Right cardiac atrium (tissue), 5 donors: ENCODE measurements at regions of chr12 and their contacts with region 1.

Region 1: GRCh38 chr12:6423267-6424007 is 21.3 kb upstream of the CD27 start:
- DNase-seq: peak; percentile 87 to 93 (median 91)
- ATAC-seq: peak; percentile 96 to 97
- H3K4me3 ChIP-seq: no peak overlapping the region
- H3K27ac ChIP-seq: no peak overlapping the region
- H3K4me1 ChIP-seq: peaks cover 2% of the 10 kb centered on the region
- H3K27me3 ChIP-seq: no peaks in the 10 kb centered on the region

Region 2: DNA sequence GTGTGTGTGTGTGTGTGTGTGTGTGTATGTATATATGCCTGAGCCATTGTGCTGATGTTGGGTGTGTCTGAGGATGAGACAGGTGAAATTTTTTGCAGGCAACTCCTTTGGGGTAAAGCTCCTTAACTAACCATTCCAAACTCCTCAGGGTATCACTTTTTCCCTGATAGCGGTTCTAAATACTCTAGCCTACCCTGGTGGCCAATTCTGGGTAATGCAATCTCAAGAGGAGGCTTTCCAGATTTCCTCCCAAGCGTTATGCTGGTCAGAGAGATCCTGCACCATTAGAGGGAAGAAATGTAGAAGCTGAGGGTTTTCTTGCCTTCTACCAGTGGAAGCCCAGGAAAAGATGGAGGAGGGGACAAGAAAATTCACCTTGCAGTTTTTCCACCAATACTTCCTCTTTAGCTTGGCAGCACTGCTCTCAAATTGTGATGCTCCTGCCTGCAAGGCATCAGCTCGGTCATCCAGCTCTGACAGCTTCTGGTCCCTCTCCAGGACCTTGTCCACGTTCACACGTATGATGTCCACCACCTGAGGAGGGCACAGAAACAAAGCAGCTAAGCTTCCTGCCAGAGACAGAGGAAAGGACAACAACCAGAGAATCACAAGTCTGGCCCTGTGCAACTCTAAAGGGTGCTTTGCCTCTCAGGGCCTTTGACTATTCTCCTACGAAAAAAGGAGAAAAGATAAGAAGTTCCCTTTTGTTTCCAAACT is 42.2 kb after region 1 on chr12:
- intact Hi-C with region 1: loop called (anchors 2 to 5 kb)
- DNase-seq: no peak
- ATAC-seq: peak; percentile 32 to 34
- H3K4me3 ChIP-seq: no peak overlapping the region
- H3K27ac ChIP-seq: no peak overlapping the region
- H3K4me1 ChIP-seq: peaks cover 4% of the 10 kb centered on the region
- H3K27me3 ChIP-seq: no peaks in the 10 kb centered on the region

Region 3: DNA sequence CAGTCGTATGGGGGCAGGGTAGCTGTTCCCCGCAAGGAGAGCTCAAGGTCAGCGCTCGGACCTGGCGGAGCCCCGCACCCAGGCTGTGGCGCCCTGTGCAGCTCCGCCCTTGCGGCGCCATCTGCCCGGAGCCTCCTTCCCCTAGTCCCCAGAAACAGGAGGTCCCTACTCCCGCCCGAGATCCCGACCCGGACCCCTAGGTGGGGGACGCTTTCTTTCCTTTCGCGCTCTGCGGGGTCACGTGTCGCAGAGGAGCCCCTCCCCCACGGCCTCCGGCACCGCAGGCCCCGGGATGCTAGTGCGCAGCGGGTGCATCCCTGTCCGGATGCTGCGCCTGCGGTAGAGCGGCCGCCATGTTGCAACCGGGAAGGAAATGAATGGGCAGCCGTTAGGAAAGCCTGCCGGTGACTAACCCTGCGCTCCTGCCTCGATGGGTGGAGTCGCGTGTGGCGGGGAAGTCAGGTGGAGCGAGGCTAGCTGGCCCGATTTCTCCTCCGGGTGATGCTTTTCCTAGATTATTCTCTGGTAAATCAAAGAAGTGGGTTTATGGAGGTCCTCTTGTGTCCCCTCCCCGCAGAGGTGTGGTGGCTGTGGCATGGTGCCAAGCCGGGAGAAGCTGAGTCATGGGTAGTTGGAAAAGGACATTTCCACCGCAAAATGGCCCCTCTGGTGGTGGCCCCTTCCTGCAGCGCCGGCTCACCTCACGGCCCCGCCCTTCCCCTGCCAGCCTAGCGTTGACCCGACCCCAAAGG is 111.7 kb after region 1 on chr12:
- intact Hi-C with region 1: loop called in 3 of 4 experiments (anchors 5 kb)
- DNase-seq: peak; percentile 88 to 90 (median 89)
- ATAC-seq: peak; percentile 15 to 55
- H3K4me3 ChIP-seq: peak overlapping the region; percentile 71
- H3K27ac ChIP-seq: peak overlapping the region; percentile 97
- H3K4me1 ChIP-seq: peaks cover 7% of the 10 kb centered on the region
- H3K27me3 ChIP-seq: no peaks in the 10 kb centered on the region